ENCODE measurements at regions of chr9 and their contacts with region 1.

Region 1: GRCh38 chr9:76181020-76181641 is 213.1 kb downstream of the RFK start:
- DNase-seq: peak; percentile 62 to 99
- H3K4me3 ChIP-seq: peak overlapping the region; percentile 37; the same call in 1 of the 2 replicates
- H3K27ac ChIP-seq: peak overlapping the region; percentile 76
- H3K4me1 ChIP-seq: peaks cover 22% of the 10 kb centered on the region
- H3K27me3 ChIP-seq: no peaks in the 10 kb centered on the region
- CTCF ChIP-seq: no peak

Region 2: DNA sequence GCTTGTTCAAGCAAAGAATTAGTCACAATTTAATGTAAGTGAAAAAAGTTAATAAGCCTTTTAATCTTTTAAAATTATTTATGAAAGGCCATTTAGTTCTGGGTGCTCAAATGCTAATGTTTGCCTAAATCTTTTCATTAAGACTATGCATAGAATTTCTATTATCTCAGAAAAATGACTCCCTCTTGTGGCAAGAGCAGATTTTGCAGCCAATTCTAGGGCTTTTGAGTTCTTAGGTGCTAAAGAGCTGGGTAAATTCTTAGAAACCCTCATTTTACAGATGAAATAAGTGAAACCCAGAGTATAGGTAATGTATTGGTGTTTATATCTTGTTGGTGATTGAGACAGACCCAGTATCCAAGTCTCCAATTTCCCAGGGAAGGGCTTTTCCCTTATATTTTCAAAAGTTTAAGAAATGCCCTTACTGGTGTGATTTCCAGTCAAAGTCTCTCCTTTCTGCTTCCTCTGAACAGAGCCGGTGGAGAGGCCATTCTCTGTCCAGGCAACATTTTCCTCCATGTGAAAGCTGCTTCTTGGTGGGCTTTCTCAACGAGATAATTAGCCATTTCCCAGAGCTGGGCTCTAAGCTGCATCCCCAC is 314.8 kb before region 1 on chr9:
- CTCF ChIA-PET with region 1: no interaction called
- POLR2A ChIA-PET with region 1: interaction called, 10 read pairs
- intact Hi-C with region 1: no loop called
- DNase-seq: peak in 1 of 2 experiments; percentile 19
- H3K4me3 ChIP-seq: no peak overlapping the region
- H3K27ac ChIP-seq: no peak overlapping the region
- H3K4me1 ChIP-seq: no peaks in the 10 kb centered on the region
- H3K27me3 ChIP-seq: no peaks in the 10 kb centered on the region
- CTCF ChIP-seq: peak; percentile 89

Region 3: DNA sequence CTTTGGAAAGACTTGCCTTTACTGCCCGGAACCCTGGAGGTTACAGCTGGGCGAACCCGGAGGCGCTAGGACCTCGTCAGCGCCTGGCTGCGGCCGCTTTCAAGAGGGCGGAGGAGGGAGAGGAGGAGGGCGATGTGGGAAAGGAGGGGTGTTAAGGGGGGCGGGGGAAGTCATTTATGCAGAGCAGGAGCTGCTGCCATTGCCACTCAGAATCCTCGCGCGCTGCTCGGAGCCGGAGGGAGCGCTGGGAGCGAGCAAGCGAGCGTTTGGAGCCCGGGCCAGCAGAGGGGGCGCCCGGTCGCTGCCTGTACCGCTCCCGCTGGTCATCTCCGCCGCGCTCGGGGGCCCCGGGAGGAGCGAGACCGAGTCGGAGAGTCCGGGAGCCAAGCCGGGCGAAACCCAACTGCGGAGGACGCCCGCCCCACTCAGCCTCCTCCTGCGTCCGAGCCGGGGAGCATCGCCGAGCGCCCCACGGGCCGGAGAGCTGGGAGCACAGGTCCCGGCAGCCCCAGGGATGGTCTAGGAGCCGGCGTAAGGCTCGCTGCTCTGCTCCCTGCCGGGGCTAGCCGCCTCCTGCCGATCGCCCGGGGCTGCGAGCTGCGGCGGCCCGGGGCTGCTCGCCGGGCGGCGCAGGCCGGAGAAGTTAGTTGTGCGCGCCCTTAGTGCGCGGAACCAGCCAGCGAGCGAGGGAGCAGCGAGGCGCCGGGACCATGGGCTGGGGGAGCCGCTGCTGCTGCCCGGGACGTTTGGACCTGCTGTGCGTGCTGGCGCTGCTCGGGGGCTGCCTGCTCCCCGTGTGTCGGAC is 290.5 kb before region 1 on chr9 and contains the start of gene PCSK5:
- CTCF ChIA-PET with region 1: interaction called, 4 read pairs
- POLR2A ChIA-PET with region 1: no interaction called
- intact Hi-C with region 1: loop called (anchors 2 kb)
- DNase-seq: peak; percentile 88 to 89
- H3K4me3 ChIP-seq: peak within 1 kb of the TSS; percentile 76
- H3K27ac ChIP-seq: peak within 1 kb of the TSS; percentile 92
- H3K4me1 ChIP-seq: peaks cover 32% of the 10 kb centered on the region
- H3K27me3 ChIP-seq: no peaks in the 10 kb centered on the region
- CTCF ChIP-seq: peak; percentile 35; the same call in 1 of the 2 replicates
- total RNA-seq, gene PCSK5: 8.2 and 9.8 TPM in 2 replicates

Region 4: DNA sequence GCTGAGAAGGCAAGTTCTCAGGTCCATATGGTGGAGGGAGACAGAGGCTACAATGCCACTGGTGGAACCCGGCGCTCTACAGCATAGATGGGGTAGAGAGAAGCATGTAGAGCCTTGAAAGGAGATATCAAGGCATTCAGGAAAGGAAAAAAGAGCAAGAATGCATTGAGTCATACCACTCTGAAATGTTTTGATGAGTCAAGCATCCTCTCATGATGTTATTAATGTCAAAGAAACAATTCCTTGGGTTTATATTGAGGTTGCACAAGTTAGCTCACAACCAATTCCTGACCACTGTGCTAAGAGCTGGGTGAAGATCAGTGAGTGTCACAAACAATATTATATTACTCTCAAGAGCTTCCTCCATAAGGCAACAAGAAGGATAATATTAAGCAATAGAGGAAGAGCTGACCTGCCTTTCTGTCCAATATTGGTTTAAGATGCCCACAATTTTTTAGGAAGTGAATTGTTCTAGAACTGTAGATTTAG is 35.1 kb after region 1 on chr9:
- CTCF ChIA-PET with region 1: no interaction called
- POLR2A ChIA-PET with region 1: interaction called, 3 read pairs
- intact Hi-C with region 1: loop called (anchors 1 kb)
- DNase-seq: peak in 1 of 2 experiments; percentile 97
- H3K4me3 ChIP-seq: no peak overlapping the region
- H3K27ac ChIP-seq: peak overlapping the region; percentile 86
- H3K4me1 ChIP-seq: peaks cover 42% of the 10 kb centered on the region
- H3K27me3 ChIP-seq: no peaks in the 10 kb centered on the region
- CTCF ChIP-seq: no peak